ENCODE measurements at regions of chr3 and their contacts with region 1.

Region 1: GRCh38 chr3:113495035-113495434 is 19.9 kb downstream of the SPICE1 start:
- DNase-seq: no peak
- ATAC-seq: peak in 1 of 2 donors; percentile 50

Region 2: DNA sequence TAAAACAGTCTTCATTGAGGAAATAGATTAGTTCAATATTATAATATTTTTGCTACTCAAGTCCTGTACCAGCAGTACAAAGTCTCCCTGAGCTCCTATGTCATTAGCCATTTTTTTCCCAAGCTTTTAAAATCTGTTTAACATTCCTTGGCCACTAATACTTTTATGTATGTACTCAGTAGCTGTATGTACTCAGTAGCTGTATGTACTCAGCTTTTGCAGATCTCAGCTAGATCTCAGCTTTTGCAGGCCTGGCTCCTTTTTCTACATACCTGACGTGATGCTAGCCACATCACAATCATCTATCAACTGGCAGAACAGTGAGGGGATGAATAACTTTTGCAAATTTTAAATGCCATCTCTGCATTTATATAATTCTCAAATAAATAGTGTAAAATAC is 1214.8 kb before region 1 on chr3:
- intact Hi-C with region 1: no loop called
- DNase-seq: no peak
- ATAC-seq: no peak

Region 3: DNA sequence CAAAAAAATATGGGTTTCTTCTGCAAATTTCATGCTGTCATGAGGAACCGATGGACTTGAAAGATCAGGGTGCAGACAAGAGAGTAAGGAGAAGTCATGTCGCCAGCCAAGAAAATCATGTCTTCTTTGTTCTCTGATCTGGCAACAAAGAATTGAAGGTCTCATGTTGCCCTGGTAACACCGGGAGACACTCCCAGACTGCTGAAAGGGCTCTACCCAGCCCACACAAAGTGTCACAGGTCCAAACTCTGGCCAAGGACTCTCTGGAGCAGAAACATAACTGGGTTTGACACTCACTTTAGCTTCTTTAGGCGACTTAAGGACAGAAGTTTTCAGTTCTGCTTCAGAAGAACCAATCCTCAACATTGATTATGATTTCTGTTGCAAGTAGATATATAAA is 80.2 kb after region 1 on chr3:
- intact Hi-C with region 1: loop called in 1 of 2 experiments (anchors 5 kb)
- DNase-seq: no peak
- ATAC-seq: no peak

Region 4: DNA sequence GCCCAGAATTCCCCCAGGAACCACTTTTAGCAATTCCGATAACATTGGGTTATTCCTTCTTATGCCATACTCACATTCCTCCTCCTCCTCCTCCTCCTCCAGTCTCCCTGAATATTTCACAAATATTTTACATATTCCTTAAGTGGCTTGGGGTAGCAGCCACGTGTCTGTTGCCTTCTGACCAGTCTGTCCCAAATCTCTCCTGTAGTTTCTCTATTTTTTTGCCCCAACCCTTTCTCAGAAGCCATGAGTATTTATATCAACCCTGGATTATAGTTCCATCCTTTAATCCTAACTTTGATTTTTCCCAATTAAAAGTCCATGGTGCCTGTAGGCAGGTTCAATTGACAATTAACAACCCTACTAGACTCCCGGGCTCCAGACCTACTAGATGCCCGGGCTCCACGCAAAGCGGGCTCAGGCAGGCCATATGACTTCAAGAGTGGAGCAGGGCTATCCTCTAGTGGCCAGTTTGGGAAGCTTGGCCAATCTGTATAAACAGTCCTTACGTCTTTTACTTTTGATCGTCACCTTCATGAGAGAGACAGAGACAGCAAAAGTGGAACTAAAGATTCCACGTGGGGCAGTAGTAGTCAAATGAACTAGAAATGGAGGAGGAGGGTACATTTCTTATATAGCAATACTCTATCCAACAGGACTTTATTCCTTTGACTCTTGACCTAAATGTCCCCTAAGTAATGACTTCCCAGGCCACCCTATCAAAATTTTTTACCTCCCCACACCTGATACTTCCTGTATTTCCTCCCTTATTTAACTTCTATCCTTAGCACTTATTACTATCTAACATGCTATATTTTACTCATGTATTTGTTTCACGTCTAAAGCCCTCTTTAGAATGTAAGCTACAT is 131.7 kb after region 1 on chr3:
- intact Hi-C with region 1: loop called (anchors 1 to 10 kb)
- DNase-seq: peak; percentile 57
- ATAC-seq: peak; percentile 90 to 93

Region 5: DNA sequence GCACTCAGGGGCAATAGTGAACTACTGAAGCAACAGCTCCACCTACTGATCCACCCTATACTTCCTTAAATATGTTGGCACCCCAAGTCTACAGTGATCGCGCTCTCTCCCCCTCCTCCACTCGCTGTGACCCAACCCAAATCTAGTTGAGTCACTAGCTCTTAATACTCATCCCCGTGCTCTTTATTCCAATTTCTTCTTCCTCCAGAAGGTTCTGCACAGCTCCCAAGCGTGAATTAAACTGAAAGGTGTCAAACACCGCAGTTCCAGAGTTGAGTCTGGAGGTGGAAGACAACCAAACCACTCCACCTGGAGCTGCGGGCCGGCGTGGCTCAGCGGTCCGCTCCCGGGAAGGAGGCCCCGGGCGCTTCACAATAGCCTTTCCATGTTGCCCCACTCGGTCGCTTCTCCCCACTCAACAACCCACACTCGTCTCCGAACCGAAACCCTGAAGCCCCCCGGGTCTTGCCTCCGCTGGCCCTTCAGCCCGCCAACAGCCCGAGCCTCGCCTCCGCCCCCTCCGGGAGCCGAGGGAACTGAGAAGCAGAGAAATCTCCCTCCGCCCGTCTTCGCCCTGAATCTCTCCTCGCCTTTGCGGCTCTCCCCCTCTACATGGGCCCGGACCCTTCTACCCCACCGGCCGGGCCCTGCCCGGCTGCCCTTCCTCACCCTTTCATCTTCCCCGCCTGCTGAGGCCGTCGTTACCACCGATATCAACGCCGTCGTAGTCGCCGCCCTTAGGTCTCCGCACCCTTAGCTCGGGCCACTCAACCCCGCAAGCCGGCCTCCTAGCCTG is 250.4 kb after region 1 on chr3:
- intact Hi-C with region 1: loop called in 1 of 2 experiments (anchors 5 kb)
- DNase-seq: peak; percentile 64
- ATAC-seq: peak; percentile 67 to 78